PC-9 (cell line): ENCODE measurements at regions of chr3 and their contacts with region 1.

Region 1: GRCh38 chr3:191412759-191413158 is 48.2 kb upstream of the PYDC2 start:
- DNase-seq: peak in 1 of 2 experiments; percentile 41
- H3K4me3 ChIP-seq: no peak overlapping the region
- H3K27ac ChIP-seq: no peak overlapping the region
- H3K4me1 ChIP-seq: peaks cover 8% of the 10 kb centered on the region
- H3K27me3 ChIP-seq: no peaks in the 10 kb centered on the region
- CTCF ChIP-seq: no peak

Region 2: GRCh38 chr3:190883973-190884832 is 528.6 kb before region 1 on chr3:
- CTCF ChIA-PET with region 1: no interaction called
- POLR2A ChIA-PET with region 1: no interaction called
- intact Hi-C with region 1: loop called (anchors 10 kb)
- DNase-seq: peak; percentile 48 to 50
- H3K4me3 ChIP-seq: no peak overlapping the region
- H3K27ac ChIP-seq: no peak overlapping the region
- H3K4me1 ChIP-seq: no peaks in the 10 kb centered on the region
- H3K27me3 ChIP-seq: no peaks in the 10 kb centered on the region
- CTCF ChIP-seq: peak; percentile 97

Region 3: DNA sequence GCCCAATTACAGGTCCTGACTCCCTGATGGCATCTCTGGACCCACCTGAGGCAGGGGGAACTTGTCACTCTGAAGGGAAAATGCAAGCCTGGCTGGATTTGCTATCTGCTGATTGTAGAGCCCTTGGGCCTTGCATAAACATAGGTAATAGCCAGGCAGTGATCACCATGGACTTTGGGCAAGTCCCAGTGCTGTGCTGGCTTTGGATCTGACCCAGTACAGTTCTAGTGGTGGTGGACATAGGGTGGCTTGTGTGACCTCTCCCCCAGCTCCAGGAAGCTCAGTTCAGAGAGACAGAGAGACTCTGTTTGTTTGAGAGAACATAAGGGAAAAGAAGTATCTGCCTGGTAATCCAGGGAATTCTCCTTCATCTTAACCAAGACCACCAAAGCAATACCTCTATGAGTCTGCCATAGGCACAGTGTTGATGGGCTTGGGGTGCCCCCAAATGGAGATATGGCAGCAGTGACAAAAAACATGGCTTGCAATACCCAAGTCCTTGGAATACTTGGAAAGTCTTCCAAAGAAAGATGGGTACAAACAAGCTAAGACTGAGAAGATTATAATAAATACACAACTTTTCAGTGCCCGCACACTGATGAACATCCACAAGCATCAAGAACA is 396.7 kb after region 1 on chr3:
- CTCF ChIA-PET with region 1: no interaction called
- POLR2A ChIA-PET with region 1: no interaction called
- intact Hi-C with region 1: loop called (anchors 10 kb)
- DNase-seq: no peak
- H3K4me3 ChIP-seq: no peak overlapping the region
- H3K27ac ChIP-seq: no peak overlapping the region
- H3K4me1 ChIP-seq: no peaks in the 10 kb centered on the region
- H3K27me3 ChIP-seq: no peaks in the 10 kb centered on the region
- CTCF ChIP-seq: no peak

Region 4: DNA sequence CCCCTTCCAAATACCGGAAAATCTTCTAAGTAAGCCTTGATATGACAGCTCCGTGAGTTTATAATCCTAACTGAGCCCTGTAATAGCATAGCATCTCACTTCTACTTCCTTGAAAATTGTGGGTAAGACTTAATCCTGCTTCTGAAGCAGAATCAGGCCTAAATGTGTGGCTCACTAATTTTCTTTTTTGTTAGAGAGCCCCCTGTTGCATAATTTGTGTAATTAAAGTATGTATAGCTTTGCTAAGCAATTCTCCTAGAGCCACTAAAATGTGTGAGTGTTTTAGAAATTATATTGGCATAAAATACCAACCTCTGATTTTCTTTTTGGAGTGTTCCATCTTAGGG is 1010.2 kb after region 1 on chr3:
- CTCF ChIA-PET with region 1: interaction called, 3 read pairs
- POLR2A ChIA-PET with region 1: no interaction called
- intact Hi-C with region 1: loop called (anchors 1 kb)
- DNase-seq: peak in 1 of 2 experiments; percentile 65
- H3K4me3 ChIP-seq: no peak overlapping the region
- H3K27ac ChIP-seq: no peak overlapping the region
- H3K4me1 ChIP-seq: peaks cover 9% of the 10 kb centered on the region
- H3K27me3 ChIP-seq: no peaks in the 10 kb centered on the region
- CTCF ChIP-seq: peak; percentile 79